Cardiac septum (tissue), 1 donor: ENCODE measurements at regions of chr16 and their contacts with region 1.

Region 1: DNA sequence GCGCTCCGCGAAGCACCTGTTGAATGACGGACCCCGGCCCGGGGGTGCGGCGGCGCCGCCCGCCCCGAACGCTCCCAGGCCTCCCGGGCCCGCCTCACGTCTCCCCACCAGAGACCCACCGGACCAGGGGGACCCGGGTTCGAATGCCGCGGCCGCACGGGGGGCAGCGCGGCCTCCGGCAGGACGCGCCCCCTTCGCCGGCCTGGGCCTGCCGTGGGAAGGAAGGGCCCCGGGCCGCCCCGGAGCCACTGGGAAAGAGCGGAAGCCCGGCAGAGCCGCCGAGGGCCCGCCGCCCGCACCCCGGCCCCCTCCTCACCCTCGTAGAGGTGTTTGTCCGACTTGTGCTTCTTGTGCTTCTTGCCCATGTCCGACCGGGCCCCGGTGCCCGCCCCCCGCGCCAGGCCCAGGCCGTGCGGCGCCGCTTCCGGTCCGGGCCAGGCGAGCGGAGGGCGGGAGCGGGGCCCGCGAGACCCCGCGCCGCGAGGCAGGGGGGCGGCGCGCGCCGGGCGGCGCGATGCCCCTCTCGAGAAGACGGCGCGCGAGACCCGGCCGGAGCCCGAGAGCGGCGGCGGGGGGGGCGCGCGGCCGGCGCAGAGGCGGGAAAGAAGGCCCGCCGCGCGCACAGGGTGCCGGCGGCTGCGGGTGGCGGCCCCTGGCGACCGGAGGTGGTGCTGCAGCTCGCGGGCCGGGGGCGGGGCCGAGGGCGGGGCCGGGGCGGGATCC is at the start of gene BRD7:
- DNase-seq: peak; percentile 85
- total RNA-seq, gene BRD7: 53.4 TPM

Region 2: DNA sequence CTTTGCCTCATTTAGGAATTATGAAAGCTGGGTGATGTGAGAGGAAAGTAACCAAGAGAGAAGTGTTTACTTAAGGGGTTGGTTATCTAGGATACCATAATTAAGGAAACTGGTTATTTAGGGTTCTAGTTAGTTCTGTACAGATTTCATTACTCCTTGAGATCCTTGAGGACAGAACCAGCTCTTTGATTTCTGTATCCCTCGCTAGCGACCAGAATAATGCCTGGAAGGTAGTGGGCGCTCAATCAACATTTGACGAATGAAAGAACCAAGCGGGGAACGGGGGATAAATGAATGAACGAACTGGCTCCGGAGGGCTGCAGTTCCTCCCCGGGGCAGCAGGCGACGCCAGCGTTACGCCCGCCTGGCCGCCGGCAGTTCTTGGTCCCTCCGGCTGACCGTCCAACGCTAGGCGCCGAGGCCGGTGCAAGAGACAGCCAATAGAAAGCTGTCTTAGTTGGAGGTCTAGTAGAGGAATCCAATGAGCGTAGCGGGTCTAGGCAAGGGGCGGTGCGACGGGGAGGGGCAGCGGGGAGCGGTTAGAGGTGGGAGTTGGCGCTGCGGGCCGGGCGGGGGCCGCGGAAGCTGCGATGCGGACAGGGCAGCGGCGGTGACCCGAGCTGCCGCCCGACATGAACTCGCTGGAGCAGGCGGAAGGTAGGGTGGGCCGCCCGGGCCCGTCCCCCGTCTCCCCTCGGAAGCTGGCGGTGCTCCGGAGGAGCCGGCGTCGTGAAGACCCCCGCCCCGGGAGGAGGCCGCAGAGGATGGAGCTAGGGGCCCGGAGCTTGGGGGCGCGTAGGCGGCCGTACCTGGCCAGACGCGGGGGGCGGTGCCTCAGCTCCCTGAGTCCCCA is 343.7 kb before region 1 on chr16 and contains the start of gene CNEP1R1:
- intact Hi-C with region 1: loop called (anchors 10 kb)
- DNase-seq: peak; percentile 96
- total RNA-seq, gene CNEP1R1: 17.9 TPM

Region 3: DNA sequence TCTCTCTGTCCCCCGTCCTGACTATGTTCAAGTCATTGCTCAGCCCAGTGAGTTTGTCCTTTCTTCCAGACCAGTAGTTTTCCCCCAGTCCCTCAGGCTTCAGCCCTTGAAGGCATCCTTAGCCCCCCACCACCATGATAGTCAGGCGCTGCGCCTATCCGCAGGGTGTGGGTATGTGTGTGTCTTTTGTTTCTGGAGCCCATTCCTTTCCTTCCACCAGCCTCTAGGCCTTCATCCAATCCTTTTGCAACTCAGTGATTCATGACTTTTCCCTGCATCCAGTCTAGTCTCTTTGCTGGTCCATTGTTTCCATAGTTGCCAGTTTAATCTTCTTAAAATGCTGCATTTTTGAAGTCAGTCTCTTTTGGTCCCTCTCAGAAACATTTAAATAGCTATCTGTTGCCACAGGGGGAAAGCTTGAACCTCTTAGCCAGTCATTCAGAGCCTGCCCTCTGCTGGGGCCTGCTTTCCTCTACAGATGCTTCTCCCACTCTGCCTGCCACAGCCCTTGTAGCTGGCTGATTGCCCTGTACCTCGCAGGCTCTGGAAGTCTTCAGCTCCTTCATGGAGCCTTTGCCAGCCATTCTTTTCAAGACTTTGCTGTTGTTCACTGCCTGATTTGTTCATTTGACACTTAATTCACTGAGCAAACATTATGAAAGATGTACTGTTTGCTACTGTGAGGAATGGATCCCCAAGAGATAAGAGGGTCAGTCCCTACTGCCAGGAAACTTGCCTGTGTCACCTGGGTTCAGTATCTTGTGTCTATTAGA is 158.1 kb before region 1 on chr16:
- intact Hi-C with region 1: loop called (anchors 10 kb)
- DNase-seq: peak; percentile 86

Region 4: GRCh38 chr16:50593410-50594150 is 225.0 kb after region 1 on chr16:
- intact Hi-C with region 1: loop called (anchors 5 kb)
- DNase-seq: no peak

Region 5: DNA sequence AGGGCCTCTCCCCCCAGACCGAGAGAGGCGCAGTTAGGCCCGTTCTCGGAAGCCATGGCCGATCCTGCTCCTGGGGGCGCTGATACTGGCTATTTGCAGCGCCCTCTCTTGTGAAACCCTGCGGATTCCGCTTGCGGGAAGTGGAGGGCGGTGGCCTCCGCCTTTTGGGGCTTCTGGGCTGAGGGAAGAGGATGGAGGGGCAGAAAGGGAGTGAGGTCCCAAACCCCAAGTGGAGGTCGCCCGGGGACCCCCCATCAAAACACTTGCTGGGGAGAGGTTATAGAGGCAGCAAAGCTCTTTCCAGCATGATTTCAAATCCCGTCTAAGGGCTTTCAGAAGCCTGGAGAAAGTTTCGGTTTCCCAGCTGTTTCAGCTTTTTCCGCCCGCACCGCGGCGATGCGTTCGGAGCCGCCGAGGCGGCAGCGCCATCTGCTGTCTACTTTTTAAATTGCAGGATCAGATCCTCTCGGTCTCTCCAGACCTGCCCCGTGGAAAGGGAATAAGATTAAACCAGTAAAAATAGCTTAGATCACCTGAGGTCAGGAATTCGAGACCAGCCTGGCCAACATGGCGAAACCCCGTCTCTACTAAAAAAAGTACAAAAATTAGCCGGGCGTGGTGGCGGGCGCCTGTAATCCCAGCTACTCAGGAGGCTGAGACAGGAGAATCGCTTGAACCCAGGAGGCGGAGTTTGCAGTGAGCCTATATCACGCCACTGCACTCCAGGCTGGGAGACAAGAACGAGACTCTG is 296.7 kb after region 1 on chr16:
- intact Hi-C with region 1: loop called (anchors 5 kb)
- DNase-seq: peak; percentile 93

Region 6: DNA sequence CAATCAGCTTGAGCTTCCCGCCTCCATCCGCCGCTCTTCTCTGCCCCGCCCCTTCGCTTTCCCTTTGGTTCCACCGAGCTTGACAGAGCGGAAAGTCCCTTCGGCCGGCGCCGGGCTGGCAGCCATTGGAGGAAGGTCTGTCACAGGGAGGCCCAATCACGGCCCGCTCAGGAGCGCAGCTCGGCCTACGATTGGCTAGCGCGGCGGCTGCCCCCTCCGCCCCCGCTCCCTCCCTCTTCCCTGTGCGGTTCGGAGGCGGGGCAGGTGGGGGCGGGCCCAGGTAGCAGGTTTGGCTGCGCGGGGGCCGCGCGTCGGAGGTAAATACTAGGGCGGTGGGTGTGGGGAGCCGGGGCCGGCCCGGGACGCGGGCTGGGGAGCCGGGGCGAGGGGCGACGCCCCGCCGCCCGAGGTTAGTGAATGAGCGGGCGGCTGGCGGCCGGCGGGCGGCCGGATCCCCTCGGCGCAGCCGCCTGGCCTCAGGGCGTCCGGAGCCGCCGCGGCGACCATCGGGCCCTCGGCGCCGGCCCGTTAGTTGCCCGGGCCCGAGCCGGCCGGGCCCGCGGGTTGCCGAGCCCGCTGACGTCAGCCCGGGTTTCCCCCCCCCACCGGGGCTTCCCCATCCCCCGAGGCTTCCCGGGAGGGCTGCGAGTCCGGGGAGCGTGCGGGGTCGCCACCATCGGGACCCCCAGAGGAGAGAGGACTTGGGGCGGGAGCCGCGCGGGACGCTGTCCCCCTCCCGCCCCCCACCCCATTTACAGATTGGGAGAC is 373.4 kb after region 1 on chr16 and contains the start of gene CYLD:
- intact Hi-C with region 1: loop called (anchors 10 kb)
- DNase-seq: peak; percentile 100
- total RNA-seq, gene CYLD: 39.5 TPM

Region 7: DNA sequence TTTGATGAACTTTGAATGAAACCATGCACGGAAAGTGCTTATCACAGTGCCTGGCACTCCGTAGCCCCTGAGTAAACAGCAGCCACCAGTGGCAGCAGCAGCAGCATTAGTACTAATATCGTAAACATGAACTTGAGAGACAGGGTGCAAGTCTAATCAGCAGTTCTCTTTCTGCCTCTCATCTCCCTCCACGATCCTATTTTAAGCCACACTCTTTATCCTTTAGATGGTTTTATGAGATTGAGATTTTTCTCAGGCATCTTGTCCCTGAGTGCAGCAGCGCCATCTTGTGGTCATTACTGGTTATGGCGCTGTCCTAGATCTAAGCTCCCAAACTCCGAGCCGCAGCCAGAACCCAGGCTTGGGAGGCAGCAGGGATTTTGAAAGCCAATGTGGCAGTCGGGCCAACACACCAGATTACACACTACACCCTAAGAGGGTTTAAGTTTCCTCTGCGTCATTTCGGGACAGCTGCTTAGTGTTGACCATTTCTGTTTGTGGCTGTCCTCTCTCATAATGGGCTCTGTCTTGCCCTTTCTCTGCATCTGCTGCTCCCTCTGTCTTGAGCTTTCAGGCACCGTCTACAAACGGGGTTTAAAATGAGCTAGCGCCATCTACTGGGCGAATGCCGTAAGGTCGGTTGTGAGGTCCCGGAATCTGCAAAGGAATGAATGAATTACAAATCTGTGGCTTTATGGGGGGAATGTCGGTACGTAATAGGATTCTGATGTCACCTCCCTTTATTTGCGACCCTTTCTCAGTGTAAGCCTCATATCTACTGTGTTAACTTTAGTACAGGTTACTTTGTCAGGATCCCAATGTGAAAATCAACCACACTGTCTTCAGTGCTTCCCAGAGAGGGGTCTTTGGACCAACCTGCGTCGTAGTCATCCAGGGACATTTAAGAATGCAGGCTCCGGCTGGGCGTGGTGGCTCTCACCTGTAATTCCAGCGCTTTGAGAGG is 437.8 kb after region 1 on chr16:
- intact Hi-C with region 1: loop called (anchors 10 kb)
- DNase-seq: peak; percentile 83